ENCODE measurements at regions of chr13 and their contacts with region 1.

Region 1: DNA sequence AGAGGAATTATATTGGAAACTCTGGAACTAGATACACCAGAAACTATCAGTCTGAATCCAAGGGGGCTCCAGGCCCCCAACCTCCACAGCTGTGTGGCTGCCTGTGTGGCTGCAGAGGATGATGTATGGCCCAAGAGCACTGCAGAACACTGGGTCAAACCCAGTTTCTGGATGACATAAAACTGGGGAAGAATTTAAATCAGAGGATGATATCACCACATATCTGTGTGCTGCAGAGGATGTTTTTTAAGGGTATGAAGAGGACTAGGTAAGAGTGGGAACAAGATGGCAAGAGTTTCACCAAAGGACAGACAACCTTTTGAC is 226.4 kb downstream of the SUCLA2 start:
- DNase-seq: no peak
- ATAC-seq: peak; percentile 22; the same call in 1 of the 2 replicates
- H3K4me3 ChIP-seq: no peak overlapping the region
- H3K27ac ChIP-seq: no peak overlapping the region
- H3K4me1 ChIP-seq: peaks cover 4 to 5% of the 10 kb centered on the region in 2 experiments; a peak in 3 of 4 replicates
- H3K27me3 ChIP-seq: no peaks in the 10 kb centered on the region
- CTCF ChIP-seq: no peak
- POLR2A ChIP-seq: no peak
- RAD21 ChIP-seq: no peak

Region 2: DNA sequence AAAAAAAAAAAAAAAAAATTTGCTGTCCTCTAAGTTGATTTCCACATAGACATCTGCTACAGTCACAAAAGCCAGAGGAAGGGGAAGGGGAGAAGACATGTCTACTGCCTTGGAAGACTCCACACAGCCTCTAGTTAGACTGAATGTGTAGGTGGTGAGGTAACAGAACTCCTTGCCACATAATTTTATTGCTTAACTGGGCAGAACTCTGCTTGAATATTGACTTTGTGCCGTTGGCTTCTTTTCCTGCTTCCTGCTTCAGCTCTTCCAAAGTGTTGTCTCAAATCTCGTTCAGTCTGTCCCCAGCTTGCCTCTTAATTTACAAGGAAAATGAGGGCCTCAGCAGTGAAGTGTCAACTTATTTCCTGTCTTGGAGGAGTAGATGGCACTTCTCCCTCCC is 1014.8 kb before region 1 on chr13:
- CTCF ChIA-PET with region 1: no interaction called
- POLR2A ChIA-PET with region 1: no interaction called
- RAD21 ChIA-PET with region 1: no interaction called
- intact Hi-C with region 1: loop called (anchors 5 kb)
- DNase-seq: no peak
- ATAC-seq: no peak
- H3K4me3 ChIP-seq: no peak overlapping the region
- H3K27ac ChIP-seq: no peak overlapping the region
- H3K4me1 ChIP-seq: no peaks in the 10 kb centered on the region
- H3K27me3 ChIP-seq: peaks cover 6% of the 10 kb centered on the region; the same call in 1 of the 2 replicates
- CTCF ChIP-seq: no peak
- POLR2A ChIP-seq: no peak
- RAD21 ChIP-seq: no peak

Region 3: DNA sequence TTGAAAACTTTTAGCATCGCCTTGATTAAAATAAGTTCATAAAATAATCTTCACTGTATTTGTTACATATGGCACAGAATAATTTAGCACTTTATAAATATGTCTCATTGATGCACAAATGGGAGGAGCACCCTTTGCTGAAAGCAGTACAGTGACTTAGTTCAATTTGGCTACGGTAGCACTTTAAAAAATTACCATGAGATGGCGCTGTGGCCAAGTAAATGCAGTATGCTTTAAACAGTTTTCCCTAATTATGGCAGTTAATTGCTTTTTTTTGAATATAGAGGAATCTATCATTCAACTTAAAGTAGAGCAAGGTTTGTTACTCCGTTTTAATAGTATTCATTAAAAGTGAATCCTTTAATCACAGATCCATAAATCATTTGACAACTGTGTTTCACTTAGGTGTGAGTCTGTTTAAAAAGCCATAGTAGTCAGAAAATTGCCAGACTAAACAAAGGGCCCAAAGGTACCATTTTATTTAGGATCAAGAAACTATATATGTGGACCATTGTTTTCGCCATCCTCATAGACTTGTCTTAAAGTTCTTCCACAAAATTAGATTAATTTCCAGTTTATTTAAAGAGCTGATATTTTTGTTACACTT is 942.9 kb before region 1 on chr13:
- CTCF ChIA-PET with region 1: no interaction called
- POLR2A ChIA-PET with region 1: no interaction called
- RAD21 ChIA-PET with region 1: no interaction called
- intact Hi-C with region 1: loop called (anchors 1 kb)
- DNase-seq: peak; percentile 51
- ATAC-seq: peak; percentile 91
- H3K4me3 ChIP-seq: no peak overlapping the region
- H3K27ac ChIP-seq: no peak overlapping the region
- H3K4me1 ChIP-seq: no peaks in the 10 kb centered on the region
- H3K27me3 ChIP-seq: no peaks in the 10 kb centered on the region
- CTCF ChIP-seq: peak; percentile 48 to 95 (median 59); a peak in 5 of 6 replicates
- POLR2A ChIP-seq: no peak
- RAD21 ChIP-seq: peak; percentile 78

Region 4: GRCh38 chr13:46881621-46882020 is 893.0 kb before region 1 on chr13:
- CTCF ChIA-PET with region 1: no interaction called
- POLR2A ChIA-PET with region 1: no interaction called
- RAD21 ChIA-PET with region 1: no interaction called
- intact Hi-C with region 1: no loop called
- DNase-seq: no peak
- ATAC-seq: no peak
- H3K4me3 ChIP-seq: no peak overlapping the region
- H3K27ac ChIP-seq: no peak overlapping the region
- H3K4me1 ChIP-seq: no peaks in the 10 kb centered on the region
- H3K27me3 ChIP-seq: peaks cover 80% of the 10 kb centered on the region
- CTCF ChIP-seq: no peak
- POLR2A ChIP-seq: no peak
- RAD21 ChIP-seq: no peak

Region 5: GRCh38 chr13:46893798-46894560 is 880.7 kb before region 1 on chr13:
- CTCF ChIA-PET with region 1: no interaction called
- POLR2A ChIA-PET with region 1: no interaction called
- RAD21 ChIA-PET with region 1: no interaction called
- intact Hi-C with region 1: loop called (anchors 10 kb)
- DNase-seq: peak; percentile 6
- ATAC-seq: peak; percentile 97
- H3K4me3 ChIP-seq: no peak overlapping the region
- H3K27ac ChIP-seq: no peak overlapping the region
- H3K4me1 ChIP-seq: no peaks in the 10 kb centered on the region
- H3K27me3 ChIP-seq: peaks cover 94% of the 10 kb centered on the region
- CTCF ChIP-seq: peak; percentile 21 to 95 (median 92); a peak in 5 of 6 replicates
- POLR2A ChIP-seq: no peak
- RAD21 ChIP-seq: peak; percentile 38

Region 6: GRCh38 chr13:46975173-46975572 is 799.5 kb before region 1 on chr13:
- CTCF ChIA-PET with region 1: no interaction called
- POLR2A ChIA-PET with region 1: no interaction called
- RAD21 ChIA-PET with region 1: no interaction called
- intact Hi-C with region 1: loop called (anchors 1 kb)
- DNase-seq: no peak
- ATAC-seq: no peak
- H3K4me3 ChIP-seq: no peak overlapping the region
- H3K27ac ChIP-seq: no peak overlapping the region
- H3K4me1 ChIP-seq: no peaks in the 10 kb centered on the region
- H3K27me3 ChIP-seq: no peaks in the 10 kb centered on the region
- CTCF ChIP-seq: no peak
- POLR2A ChIP-seq: no peak
- RAD21 ChIP-seq: no peak

Region 7: DNA sequence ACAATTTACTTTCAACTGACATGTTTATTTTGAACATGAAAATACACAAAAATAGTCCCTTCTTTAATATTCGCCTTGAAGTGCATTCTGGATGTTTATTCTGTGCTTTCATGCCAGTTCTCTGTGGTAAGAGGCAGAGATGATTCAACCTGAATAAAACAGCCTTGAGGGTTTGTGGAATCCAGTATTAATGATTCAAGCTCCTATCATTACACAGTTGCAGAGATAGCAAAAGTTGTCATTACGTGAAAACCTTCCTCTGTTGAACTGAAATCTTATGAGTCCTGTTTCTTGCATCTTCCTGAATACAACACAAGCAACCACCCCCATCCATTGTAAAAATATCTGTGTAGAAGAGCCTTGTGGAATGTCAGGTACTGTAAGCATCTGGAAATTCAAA is 735.5 kb before region 1 on chr13:
- CTCF ChIA-PET with region 1: no interaction called
- POLR2A ChIA-PET with region 1: no interaction called
- RAD21 ChIA-PET with region 1: no interaction called
- intact Hi-C with region 1: no loop called
- DNase-seq: no peak
- ATAC-seq: no peak
- H3K4me3 ChIP-seq: no peak overlapping the region
- H3K27ac ChIP-seq: no peak overlapping the region
- H3K4me1 ChIP-seq: no peaks in the 10 kb centered on the region
- H3K27me3 ChIP-seq: peaks cover 43% of the 10 kb centered on the region
- CTCF ChIP-seq: no peak
- POLR2A ChIP-seq: no peak
- RAD21 ChIP-seq: no peak

Region 8: GRCh38 chr13:47816840-47817239 is 42.2 kb after region 1 on chr13:
- CTCF ChIA-PET with region 1: no interaction called
- POLR2A ChIA-PET with region 1: no interaction called
- RAD21 ChIA-PET with region 1: no interaction called
- intact Hi-C with region 1: no loop called
- DNase-seq: no peak
- ATAC-seq: no peak
- H3K4me3 ChIP-seq: no peak overlapping the region
- H3K27ac ChIP-seq: no peak overlapping the region
- H3K4me1 ChIP-seq: no peaks in the 10 kb centered on the region
- H3K27me3 ChIP-seq: no peaks in the 10 kb centered on the region
- CTCF ChIP-seq: no peak
- POLR2A ChIP-seq: no peak
- RAD21 ChIP-seq: no peak